ENCODE measurements at regions of chr7 and their contacts with region 1.

Region 1: GRCh38 chr7:10412422-10413019 is 561.2 kb upstream of the PHF14 start:
- DNase-seq: peak; percentile 48
- ATAC-seq: peak; percentile 57; the same call in 1 of the 2 replicates
- H3K4me3 ChIP-seq: no peak overlapping the region
- H3K27ac ChIP-seq: no peak overlapping the region
- H3K4me1 ChIP-seq: no peaks in the 10 kb centered on the region
- H3K27me3 ChIP-seq: no peaks in the 10 kb centered on the region
- CTCF ChIP-seq: peak; percentile 54

Region 2: DNA sequence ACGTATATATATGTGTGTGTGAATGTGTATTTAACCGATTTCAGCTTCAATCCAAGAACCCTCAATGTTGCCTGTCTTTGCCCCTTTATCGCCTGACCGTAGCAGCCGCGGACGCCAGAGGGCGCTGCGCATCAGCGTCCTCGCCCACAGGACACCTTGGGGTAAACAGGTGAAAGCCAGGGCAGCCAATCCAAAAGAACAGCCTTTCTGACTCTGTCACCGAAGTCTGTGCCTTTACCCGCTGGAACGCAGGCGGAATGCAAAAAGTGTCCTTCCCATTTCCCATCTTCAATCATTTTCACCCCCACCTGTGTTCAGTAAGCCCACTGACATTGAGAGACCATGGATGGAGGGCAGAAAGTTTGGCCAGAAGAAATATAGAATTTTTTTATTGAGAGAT is 1975.6 kb before region 1 on chr7:
- CTCF ChIA-PET with region 1: no interaction called
- POLR2A ChIA-PET with region 1: no interaction called
- intact Hi-C with region 1: loop called (anchors 5 kb)
- DNase-seq: peak; percentile 69
- ATAC-seq: peak; percentile 89
- H3K4me3 ChIP-seq: no peak overlapping the region
- H3K27ac ChIP-seq: no peak overlapping the region
- H3K4me1 ChIP-seq: no peaks in the 10 kb centered on the region
- H3K27me3 ChIP-seq: peaks cover 9% of the 10 kb centered on the region; the same call in 1 of the 2 replicates
- CTCF ChIP-seq: peak; percentile 91

Region 3: GRCh38 chr7:9523579-9523978 is 888.9 kb before region 1 on chr7:
- CTCF ChIA-PET with region 1: no interaction called
- POLR2A ChIA-PET with region 1: no interaction called
- intact Hi-C with region 1: loop called (anchors 5 kb)
- DNase-seq: no peak
- ATAC-seq: no peak
- H3K4me3 ChIP-seq: no peak overlapping the region
- H3K27ac ChIP-seq: no peak overlapping the region
- H3K4me1 ChIP-seq: no peaks in the 10 kb centered on the region
- H3K27me3 ChIP-seq: no peaks in the 10 kb centered on the region
- CTCF ChIP-seq: no peak

Region 4: DNA sequence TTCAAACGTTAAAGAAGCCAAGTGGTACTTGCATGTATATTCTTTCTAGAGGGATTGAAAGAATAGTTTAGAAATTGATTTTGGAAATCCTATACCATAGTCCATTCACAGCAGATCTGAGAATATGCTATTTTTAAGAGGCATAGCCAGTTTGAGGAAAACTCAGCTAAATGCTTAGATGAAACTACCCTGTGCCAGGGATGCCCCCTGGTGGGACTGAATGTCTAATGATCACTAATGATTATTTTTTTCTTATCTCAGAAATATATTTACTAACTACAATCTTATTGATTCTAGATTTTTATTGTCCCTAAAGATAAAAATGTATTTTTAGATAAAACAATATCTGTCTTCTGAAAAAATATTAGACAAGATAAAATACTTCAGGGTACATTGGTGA is 283.8 kb before region 1 on chr7:
- CTCF ChIA-PET with region 1: no interaction called
- POLR2A ChIA-PET with region 1: no interaction called
- intact Hi-C with region 1: loop called (anchors 10 kb)
- DNase-seq: peak; percentile 14
- ATAC-seq: peak; percentile 49; the same call in 1 of the 2 replicates
- H3K4me3 ChIP-seq: no peak overlapping the region
- H3K27ac ChIP-seq: no peak overlapping the region
- H3K4me1 ChIP-seq: no peaks in the 10 kb centered on the region
- H3K27me3 ChIP-seq: no peaks in the 10 kb centered on the region
- CTCF ChIP-seq: peak; percentile 48; the same call in 1 of the 2 replicates

Region 5: GRCh38 chr7:10557375-10557774 is 144.9 kb after region 1 on chr7:
- CTCF ChIA-PET with region 1: no interaction called
- POLR2A ChIA-PET with region 1: no interaction called
- intact Hi-C with region 1: no loop called
- DNase-seq: no peak
- ATAC-seq: no peak
- H3K4me3 ChIP-seq: no peak overlapping the region
- H3K27ac ChIP-seq: no peak overlapping the region
- H3K4me1 ChIP-seq: no peaks in the 10 kb centered on the region
- H3K27me3 ChIP-seq: no peaks in the 10 kb centered on the region
- CTCF ChIP-seq: no peak

Region 6: DNA sequence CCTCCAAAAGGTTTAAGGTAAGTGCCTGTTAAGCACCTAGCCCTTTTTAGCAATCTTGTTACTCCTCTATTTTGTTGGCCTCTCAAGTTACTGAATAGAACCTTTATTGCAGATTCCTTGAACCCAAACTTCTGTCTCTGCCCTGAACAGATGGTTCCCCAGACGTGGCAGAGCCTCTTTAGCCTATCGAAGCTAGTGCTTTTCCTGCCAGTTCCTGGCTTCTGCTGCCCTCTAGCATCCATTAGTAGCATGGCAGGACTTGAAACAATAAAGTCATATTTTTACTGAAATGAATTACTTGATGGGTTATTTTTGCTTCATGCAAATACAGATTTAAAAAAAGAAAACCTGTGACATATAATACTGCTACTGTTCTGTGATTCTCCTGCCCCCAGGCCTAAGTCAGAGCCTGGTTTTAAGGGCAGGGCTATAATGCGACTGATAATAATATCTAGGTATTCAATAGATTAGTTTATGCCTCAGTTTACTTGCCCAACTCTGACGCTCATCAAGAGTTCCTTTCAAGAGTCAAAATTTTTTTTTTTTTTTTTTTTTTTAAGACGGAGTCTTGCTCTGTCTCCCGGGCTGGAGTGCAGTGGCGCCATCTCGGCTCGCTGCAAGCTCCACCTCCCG is 476.9 kb after region 1 on chr7:
- CTCF ChIA-PET with region 1: no interaction called
- POLR2A ChIA-PET with region 1: no interaction called
- intact Hi-C with region 1: loop called (anchors 2 kb)
- DNase-seq: peak; percentile 58
- ATAC-seq: peak; percentile 90
- H3K4me3 ChIP-seq: no peak overlapping the region
- H3K27ac ChIP-seq: no peak overlapping the region
- H3K4me1 ChIP-seq: no peaks in the 10 kb centered on the region
- H3K27me3 ChIP-seq: no peaks in the 10 kb centered on the region
- CTCF ChIP-seq: peak; percentile 82

Measured in PC-3 (cell line).